Activated naive CD4-positive, alpha-beta T cell treated with anti-CD3 and anti-CD28 coated beads for 36 hours (primary cell): ENCODE measurements at regions of chr6 and their contacts with region 1.

Region 1: DNA sequence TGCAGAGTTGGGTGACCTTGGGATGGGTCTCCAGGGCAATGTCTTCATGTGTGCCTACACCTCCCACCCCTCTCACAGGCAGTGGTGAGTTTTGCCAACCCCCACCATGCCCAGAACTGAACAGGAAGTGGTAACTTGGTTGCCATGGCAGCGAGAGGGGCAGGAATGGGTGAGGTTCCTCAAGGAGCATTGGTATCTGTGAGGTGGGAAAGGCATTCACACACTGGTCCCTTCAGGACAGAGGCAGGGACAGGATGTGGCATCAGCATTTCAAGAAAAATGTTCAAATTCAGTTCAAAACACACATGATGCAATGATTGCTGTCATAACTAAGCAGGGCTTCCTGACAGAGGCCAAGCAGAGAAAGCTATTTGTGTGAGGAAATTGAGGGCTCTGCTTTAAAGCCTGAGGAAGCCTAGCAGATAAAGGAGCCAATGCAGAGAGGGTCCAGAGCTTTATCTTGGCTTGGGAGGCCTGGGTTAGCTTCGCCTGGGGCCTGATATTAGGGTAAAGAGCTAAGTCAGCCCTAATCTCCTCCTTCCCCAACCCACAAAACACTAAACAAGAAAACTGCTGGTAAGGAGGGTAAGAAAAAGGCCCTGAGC is 551 bp downstream of the TREML2 start:
- DNase-seq: peak; percentile 87
- H3K4me3 Mint-ChIP-seq: peak overlapping the region; percentile 76
- H3K27ac Mint-ChIP-seq: peak overlapping the region; percentile 94
- H3K4me1 Mint-ChIP-seq: peaks cover 65% of the 10 kb centered on the region
- H3K27me3 Mint-ChIP-seq: no peaks in the 10 kb centered on the region

Region 2: DNA sequence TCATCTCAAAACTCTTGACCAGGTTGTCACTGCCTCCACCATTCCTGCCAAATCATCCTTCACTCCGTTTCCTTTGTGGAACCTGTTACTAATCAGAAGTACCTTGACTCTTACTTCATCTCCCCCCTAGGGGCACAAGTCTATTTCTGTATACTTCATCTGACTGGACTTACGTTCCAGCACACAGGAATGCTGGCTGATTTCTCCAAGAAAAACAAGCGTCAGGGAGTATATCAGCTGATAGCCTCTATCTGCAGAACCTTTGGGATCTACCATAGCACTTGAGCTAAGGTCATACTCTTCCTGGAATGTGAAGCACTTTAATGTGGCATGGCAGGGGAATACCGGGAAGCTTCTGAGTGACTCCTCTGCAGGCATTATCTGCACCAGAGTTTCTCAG is 1088.1 kb before region 1 on chr6:
- CTCF ChIA-PET with region 1: no interaction called
- intact Hi-C with region 1: no loop called
- DNase-seq: no peak
- H3K4me3 Mint-ChIP-seq: no peak overlapping the region
- H3K27ac Mint-ChIP-seq: no peak overlapping the region
- H3K4me1 Mint-ChIP-seq: no peaks in the 10 kb centered on the region
- H3K27me3 Mint-ChIP-seq: peaks cover 5% of the 10 kb centered on the region

Region 3: GRCh38 chr6:41051873-41052272 is 148.5 kb before region 1 on chr6:
- CTCF ChIA-PET with region 1: no interaction called
- intact Hi-C with region 1: no loop called
- DNase-seq: no peak
- H3K4me3 Mint-ChIP-seq: no peak overlapping the region
- H3K27ac Mint-ChIP-seq: no peak overlapping the region
- H3K4me1 Mint-ChIP-seq: peaks cover 16% of the 10 kb centered on the region
- H3K27me3 Mint-ChIP-seq: no peaks in the 10 kb centered on the region

Region 4: GRCh38 chr6:41100871-41101287 is 99.5 kb before region 1 on chr6:
- CTCF ChIA-PET with region 1: interaction called, 3 read pairs
- intact Hi-C with region 1: loop called (anchors 5 kb)
- DNase-seq: no peak
- H3K4me3 Mint-ChIP-seq: no peak overlapping the region
- H3K27ac Mint-ChIP-seq: no peak overlapping the region
- H3K4me1 Mint-ChIP-seq: peaks cover 2% of the 10 kb centered on the region
- H3K27me3 Mint-ChIP-seq: no peaks in the 10 kb centered on the region

Region 5: GRCh38 chr6:41182069-41183034 is 18.0 kb before region 1 on chr6:
- CTCF ChIA-PET with region 1: interaction called, 12 read pairs
- intact Hi-C with region 1: no loop called
- DNase-seq: peak; percentile 74
- H3K4me3 Mint-ChIP-seq: no peak overlapping the region
- H3K27ac Mint-ChIP-seq: no peak overlapping the region
- H3K4me1 Mint-ChIP-seq: peaks cover 24% of the 10 kb centered on the region
- H3K27me3 Mint-ChIP-seq: no peaks in the 10 kb centered on the region

Region 6: DNA sequence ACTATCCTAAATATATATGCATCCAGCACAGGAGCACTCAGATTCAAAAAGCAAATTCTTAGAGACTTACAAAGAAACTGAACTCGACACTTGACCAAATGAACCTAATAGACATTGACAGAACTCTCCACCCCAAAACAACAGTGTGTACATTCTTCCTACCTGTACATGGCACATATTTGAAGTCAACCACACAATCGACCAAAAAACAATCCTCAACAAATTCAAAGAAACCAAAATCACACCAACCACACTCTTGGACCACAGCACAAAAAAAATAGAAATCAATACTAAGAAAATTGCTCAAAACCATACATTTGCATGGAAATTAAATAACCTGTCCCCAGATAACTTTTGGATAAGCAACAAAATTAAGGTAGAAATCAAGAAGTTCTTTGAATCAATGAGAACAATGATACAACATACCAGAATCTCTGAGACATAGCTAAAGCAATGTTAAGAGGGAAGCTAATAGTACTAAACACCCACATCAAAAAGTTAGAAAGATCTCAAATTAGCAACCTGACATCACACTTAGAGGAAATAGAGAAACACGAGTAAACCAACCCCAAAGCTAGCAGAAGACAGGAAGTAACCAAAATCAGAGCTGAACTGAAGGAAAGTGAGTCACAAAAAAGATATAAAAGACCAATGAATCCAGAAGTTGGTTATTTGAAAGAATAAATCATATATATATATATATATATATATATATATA is 98.5 kb after region 1 on chr6:
- CTCF ChIA-PET with region 1: no interaction called
- intact Hi-C with region 1: loop called (anchors 1 kb)
- DNase-seq: no peak
- H3K4me3 Mint-ChIP-seq: peak overlapping the region; percentile 66
- H3K27ac Mint-ChIP-seq: peak overlapping the region; percentile 91
- H3K4me1 Mint-ChIP-seq: peaks cover 76% of the 10 kb centered on the region
- H3K27me3 Mint-ChIP-seq: no peaks in the 10 kb centered on the region

Region 7: DNA sequence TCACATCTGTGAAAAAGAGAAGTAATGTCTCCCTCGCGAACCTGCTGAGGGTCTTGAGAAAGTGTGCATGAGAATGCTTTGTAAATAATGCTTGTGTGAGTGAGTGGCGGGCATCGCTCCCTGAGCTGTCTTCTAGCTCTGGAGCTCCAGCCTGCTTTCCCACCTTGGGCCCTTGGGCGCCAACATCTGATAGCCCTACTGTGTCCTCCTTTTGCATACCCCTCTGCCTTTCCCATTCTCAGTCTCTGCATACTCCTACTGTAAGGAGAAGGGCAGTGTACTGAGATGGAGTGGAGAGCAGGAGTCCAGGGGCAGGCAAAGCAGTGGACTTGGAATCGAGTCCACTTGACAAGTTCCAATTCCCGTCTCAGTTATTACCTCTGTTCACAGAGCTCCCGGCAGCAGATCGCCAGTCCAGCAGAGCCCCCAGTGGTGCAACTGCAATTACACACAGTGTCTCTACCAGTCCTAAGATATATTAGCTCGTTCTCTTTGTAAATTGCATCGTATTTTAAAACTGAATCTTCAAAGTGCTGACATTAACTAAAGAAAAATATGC is 134.2 kb after region 1 on chr6:
- CTCF ChIA-PET with region 1: no interaction called
- intact Hi-C with region 1: loop called (anchors 1 kb)
- DNase-seq: peak; percentile 30
- H3K4me3 Mint-ChIP-seq: no peak overlapping the region
- H3K27ac Mint-ChIP-seq: peak overlapping the region; percentile 78
- H3K4me1 Mint-ChIP-seq: peaks cover 46% of the 10 kb centered on the region
- H3K27me3 Mint-ChIP-seq: no peaks in the 10 kb centered on the region

Region 8: GRCh38 chr6:41735427-41736356 is 535.3 kb after region 1 on chr6 and contains the start of gene TFEB:
- CTCF ChIA-PET with region 1: no interaction called
- intact Hi-C with region 1: loop called (anchors 2 kb)
- DNase-seq: peak; percentile 96
- H3K4me3 Mint-ChIP-seq: peak within 1 kb of the TSS; percentile 72
- H3K27ac Mint-ChIP-seq: no peak within 1 kb of the TSS
- H3K4me1 Mint-ChIP-seq: peaks cover 21% of the 10 kb centered on the region
- H3K27me3 Mint-ChIP-seq: no peaks in the 10 kb centered on the region
- total RNA-seq, gene TFEB: 5.7 to 7.9 TPM